Esophagus muscularis mucosa (tissue), 4 donors: ENCODE measurements at regions of chr20 and their contacts with region 1.

Region 1: DNA sequence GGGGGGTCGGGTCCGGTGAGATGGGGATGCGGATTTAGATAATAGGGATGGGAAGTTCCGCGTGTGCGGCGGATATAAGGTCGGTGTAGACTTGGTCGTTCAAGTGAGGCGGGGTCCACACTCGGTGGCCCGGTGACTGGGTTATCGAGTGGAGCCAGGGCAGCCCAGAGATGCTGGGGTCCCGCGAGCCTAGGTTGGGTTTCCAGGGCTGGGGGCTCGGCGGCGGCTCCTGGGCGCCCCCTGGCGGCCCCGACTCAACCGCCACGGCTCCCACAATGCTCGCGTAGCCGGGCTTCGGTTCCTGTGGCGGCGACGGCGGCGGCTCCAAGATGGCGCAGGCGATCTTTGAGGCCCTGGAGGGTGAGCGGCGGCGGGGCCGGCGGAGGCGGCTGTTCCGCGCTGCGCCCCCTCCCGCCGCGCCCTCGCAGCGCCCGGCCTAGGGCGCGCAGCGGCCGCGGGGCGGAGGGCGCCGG is at the start of gene ZNF341:
- DNase-seq: peak; percentile 95
- H3K4me3 ChIP-seq: peak within 1 kb of the TSS; percentile 62 to 85 (median 70)
- H3K27ac ChIP-seq: peak within 1 kb of the TSS; percentile 86 to 95 (median 93)
- H3K4me1 ChIP-seq: peaks cover 25 to 34% (median 30%) of the 10 kb centered on the region in 4 donors
- H3K27me3 ChIP-seq: no peaks in the 10 kb centered on the region
- CTCF ChIP-seq: peak; percentile 83 to 93 (median 86)
- EP300 ChIP-seq: no peak
- POLR2A ChIP-seq: no peak
- total RNA-seq, gene ZNF341: 1.7 to 4.2 (median 3.4) TPM

Region 2: DNA sequence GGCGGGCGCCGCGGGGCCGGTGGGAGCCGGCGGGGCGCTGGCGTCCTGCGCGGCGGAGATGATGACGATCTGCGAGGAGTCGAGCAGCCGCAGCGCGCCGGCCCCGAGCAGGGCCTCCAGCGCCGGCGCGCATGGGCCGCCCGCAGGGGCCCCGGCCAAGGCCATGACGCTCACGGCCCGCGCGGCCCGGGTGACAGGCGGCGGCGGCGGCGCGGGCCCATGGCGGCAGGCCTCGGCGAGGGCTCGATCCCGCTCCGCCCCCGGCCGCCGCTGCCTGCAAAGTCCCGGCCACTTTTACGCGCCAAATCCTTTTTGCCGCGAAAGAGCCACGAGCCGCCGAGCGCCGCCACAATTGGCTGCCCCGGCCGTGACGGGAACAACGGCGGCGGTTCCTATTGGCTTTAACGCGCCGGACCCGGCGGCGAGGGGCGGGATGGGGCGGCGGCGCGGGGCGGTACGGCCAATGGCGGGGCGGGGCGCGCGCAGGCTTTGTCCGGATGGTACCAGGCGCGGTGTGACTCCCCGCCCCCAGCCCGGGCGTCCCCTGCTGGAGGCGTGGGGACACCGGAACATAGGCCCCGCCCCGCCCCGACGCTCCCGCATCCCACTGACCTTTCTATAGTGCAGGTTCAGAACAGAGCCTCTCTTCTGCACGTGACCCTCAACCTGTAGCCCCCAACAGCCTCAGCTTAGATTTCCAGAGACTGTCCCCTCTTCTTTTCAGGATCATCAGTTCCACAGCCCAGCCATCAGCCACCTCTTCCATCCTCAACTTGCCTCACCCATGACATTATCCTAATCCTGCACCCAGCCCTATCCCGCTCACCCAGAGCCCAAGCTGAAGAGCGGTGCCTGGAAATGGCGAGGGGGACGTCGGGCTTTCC is 45.4 kb before region 1 on chr20 and contains the start of gene E2F1:
- intact Hi-C with region 1: loop called (anchors 5 kb)
- DNase-seq: peak; percentile 98
- H3K4me3 ChIP-seq: peak within 1 kb of the TSS; percentile 53 to 67 (median 55)
- H3K27ac ChIP-seq: peak within 1 kb of the TSS; percentile 45 to 73 (median 69)
- H3K4me1 ChIP-seq: peaks cover 14 to 27% (median 23%) of the 10 kb centered on the region in 4 donors
- H3K27me3 ChIP-seq: no peaks in the 10 kb centered on the region
- CTCF ChIP-seq: peak; percentile 49 to 69 (median 60)
- EP300 ChIP-seq: no peak
- POLR2A ChIP-seq: no peak
- total RNA-seq, gene E2F1: 1.8 to 5.0 (median 2.9) TPM